Dendritic cell treated with granulocyte-macrophage colony-stimulating factor and Interleukin-4, amounts not matched to agents 40 ng/mL and 50 ng/mL, for 4 days (primary cell): ENCODE measurements at regions of chr16 and their contacts with region 1.

Region 1: GRCh38 chr16:8660841-8661301 is 13.5 kb upstream of the ABAT start:
- H3K4me3 Mint-ChIP-seq: no peak overlapping the region
- H3K27ac Mint-ChIP-seq: no peak overlapping the region
- H3K4me1 Mint-ChIP-seq: peaks cover 8% of the 10 kb centered on the region
- H3K27me3 Mint-ChIP-seq: no peaks in the 10 kb centered on the region

Region 2: GRCh38 chr16:8880839-8881510 is 220.1 kb after region 1 on chr16:
- intact Hi-C with region 1: loop called (anchors 5 kb)
- H3K4me3 Mint-ChIP-seq: no peak overlapping the region
- H3K27ac Mint-ChIP-seq: no peak overlapping the region
- H3K4me1 Mint-ChIP-seq: no peaks in the 10 kb centered on the region
- H3K27me3 Mint-ChIP-seq: peaks cover 7% of the 10 kb centered on the region